ENCODE measurements at regions of chr4 and their contacts with region 1.

Region 1: DNA sequence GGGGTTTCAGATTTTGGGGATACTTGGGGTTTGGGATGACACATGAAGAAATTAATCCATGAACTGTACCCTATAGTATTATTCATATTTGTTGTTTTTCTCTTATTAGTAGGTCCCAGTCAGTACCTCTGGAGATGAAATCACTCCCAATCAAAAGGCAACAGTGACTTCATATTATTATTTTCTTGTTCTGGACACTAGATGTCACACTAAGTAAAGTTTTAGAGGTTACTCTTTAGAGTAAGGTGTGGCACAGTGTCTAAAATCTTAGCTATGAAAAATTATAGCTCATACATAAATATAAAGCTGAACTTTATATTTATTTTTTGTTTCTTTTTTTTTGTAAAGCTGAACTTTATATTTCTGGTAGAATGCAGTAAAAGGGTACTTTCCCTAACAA is 35.1 kb downstream of the FAM114A1 start:
- DNase-seq: peak; percentile 67
- ATAC-seq: peak; percentile 73
- H3K4me3 ChIP-seq: no peak overlapping the region
- H3K4me3 Mint-ChIP-seq: no peak overlapping the region
- H3K27ac ChIP-seq: no peak overlapping the region
- H3K27ac Mint-ChIP-seq: no peak overlapping the region
- H3K4me1 ChIP-seq: no peaks in the 10 kb centered on the region
- H3K4me1 Mint-ChIP-seq: peaks cover 6% of the 10 kb centered on the region
- H3K27me3 ChIP-seq: no peaks in the 10 kb centered on the region
- H3K27me3 Mint-ChIP-seq: no peaks in the 10 kb centered on the region
- CTCF ChIP-seq: peak; percentile 73

Region 2: GRCh38 chr4:38788327-38788726 is 114.4 kb before region 1 on chr4:
- CTCF ChIA-PET with region 1: no interaction called
- POLR2A ChIA-PET with region 1: no interaction called
- intact Hi-C with region 1: no loop called
- DNase-seq: no peak
- ATAC-seq: no peak
- H3K4me3 ChIP-seq: no peak overlapping the region
- H3K4me3 Mint-ChIP-seq: no peak overlapping the region
- H3K27ac ChIP-seq: no peak overlapping the region
- H3K27ac Mint-ChIP-seq: no peak overlapping the region
- H3K4me1 ChIP-seq: peaks cover 8 to 20% of the 10 kb centered on the region in 2 donors
- H3K4me1 Mint-ChIP-seq: peaks cover 31% of the 10 kb centered on the region
- H3K27me3 ChIP-seq: no peaks in the 10 kb centered on the region
- H3K27me3 Mint-ChIP-seq: no peaks in the 10 kb centered on the region
- CTCF ChIP-seq: no peak

Region 3: DNA sequence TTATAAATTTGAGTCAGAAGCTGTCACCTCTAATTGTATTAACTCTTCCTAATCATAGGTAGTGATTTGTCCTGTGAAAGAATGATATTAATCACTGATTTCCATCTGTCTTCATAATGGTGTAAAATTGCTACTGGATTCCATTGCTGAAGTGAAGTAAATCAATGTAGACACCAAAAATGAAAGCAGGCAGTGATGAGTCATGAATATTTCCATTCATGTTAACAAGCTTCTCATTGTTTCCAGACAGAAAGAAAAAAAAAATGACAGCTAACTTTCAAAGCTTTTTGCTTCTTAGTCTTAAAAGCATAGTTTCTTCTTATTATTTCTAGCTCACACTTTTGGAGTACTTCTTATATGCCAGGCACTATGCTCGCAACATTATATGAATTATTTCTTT is 13.6 kb before region 1 on chr4:
- CTCF ChIA-PET with region 1: interaction called, 20 read pairs
- POLR2A ChIA-PET with region 1: no interaction called
- intact Hi-C with region 1: no loop called
- DNase-seq: no peak
- ATAC-seq: no peak
- H3K4me3 ChIP-seq: no peak overlapping the region
- H3K4me3 Mint-ChIP-seq: no peak overlapping the region
- H3K27ac ChIP-seq: no peak overlapping the region
- H3K27ac Mint-ChIP-seq: peak overlapping the region; percentile 37
- H3K4me1 ChIP-seq: no peaks in the 10 kb centered on the region
- H3K4me1 Mint-ChIP-seq: peaks cover 4% of the 10 kb centered on the region
- H3K27me3 ChIP-seq: no peaks in the 10 kb centered on the region
- H3K27me3 Mint-ChIP-seq: no peaks in the 10 kb centered on the region
- CTCF ChIP-seq: no peak

Region 4: GRCh38 chr4:39044364-39044955 is 141.8 kb after region 1 on chr4:
- CTCF ChIA-PET with region 1: interaction called, 55 read pairs
- POLR2A ChIA-PET with region 1: no interaction called
- intact Hi-C with region 1: loop called (anchors 5 kb)
- DNase-seq: peak; percentile 99
- ATAC-seq: peak; percentile 85
- H3K4me3 ChIP-seq: peak overlapping the region; percentile 66 to 94 (median 75)
- H3K4me3 Mint-ChIP-seq: peak overlapping the region; percentile 80
- H3K27ac ChIP-seq: peak overlapping the region; percentile 93 to 95
- H3K27ac Mint-ChIP-seq: peak overlapping the region; percentile 90
- H3K4me1 ChIP-seq: peaks cover 45 to 48% of the 10 kb centered on the region in 2 donors
- H3K4me1 Mint-ChIP-seq: peaks cover 59% of the 10 kb centered on the region
- H3K27me3 ChIP-seq: no peaks in the 10 kb centered on the region
- H3K27me3 Mint-ChIP-seq: no peaks in the 10 kb centered on the region
- CTCF ChIP-seq: no peak

Region 5: DNA sequence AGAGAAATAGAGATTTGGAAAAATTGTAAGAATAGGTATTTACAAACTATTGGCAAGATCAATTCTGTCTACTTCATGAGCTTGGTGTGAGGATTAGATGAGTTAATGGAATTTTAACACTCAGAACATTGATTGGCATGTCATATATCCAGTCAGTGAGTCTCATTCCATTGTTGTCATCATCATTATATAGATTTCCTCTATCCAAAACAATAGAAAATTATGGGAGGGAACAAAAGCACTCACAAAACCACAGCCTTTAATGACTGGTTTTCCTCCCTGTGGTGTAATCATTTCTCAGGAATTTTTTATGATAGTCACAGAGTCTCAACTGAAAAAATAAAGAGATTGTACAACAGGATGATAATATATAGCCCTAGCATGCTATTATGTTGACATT is 180.5 kb after region 1 on chr4:
- CTCF ChIA-PET with region 1: interaction called, 19 read pairs
- POLR2A ChIA-PET with region 1: no interaction called
- intact Hi-C with region 1: no loop called
- DNase-seq: no peak
- ATAC-seq: no peak
- H3K4me3 ChIP-seq: no peak overlapping the region
- H3K4me3 Mint-ChIP-seq: no peak overlapping the region
- H3K27ac ChIP-seq: no peak overlapping the region
- H3K27ac Mint-ChIP-seq: no peak overlapping the region
- H3K4me1 ChIP-seq: no peaks in the 10 kb centered on the region
- H3K4me1 Mint-ChIP-seq: no peaks in the 10 kb centered on the region
- H3K27me3 ChIP-seq: no peaks in the 10 kb centered on the region
- H3K27me3 Mint-ChIP-seq: no peaks in the 10 kb centered on the region
- CTCF ChIP-seq: no peak

Region 6: DNA sequence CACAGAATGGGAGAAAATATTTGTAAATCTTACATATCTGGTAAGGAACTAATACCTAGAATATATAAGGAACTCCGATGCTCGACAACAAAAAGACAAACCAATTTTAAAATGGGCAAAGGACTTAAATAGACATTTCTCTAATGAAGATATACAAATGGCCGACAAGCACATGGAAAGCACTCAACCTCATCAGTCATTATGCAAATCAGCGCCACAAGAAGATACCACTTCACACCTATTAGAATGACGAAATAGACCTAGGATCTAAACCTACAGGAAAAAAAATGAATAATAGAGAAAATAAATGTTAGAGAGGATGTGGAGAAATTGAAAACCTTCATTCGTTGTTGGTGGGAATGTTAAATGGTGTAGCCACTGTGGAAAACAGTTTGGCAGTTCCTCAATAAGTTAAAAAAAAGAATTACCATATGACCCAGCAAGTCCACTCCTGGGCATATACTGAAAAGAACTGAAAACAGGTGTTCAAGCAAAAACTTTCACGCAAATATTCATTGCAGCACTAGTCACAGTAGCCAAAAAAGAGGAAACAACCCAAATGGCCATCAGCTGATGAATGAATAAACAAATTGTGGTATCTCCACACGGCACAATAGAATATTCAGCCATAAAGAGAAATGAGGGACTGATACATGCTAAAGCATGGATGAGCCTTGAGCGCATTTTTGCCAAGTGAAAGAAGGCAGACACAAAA is 222.3 kb after region 1 on chr4:
- CTCF ChIA-PET with region 1: interaction called, 17 read pairs
- POLR2A ChIA-PET with region 1: no interaction called
- intact Hi-C with region 1: no loop called
- DNase-seq: peak; percentile 78
- ATAC-seq: peak; percentile 86
- H3K4me3 ChIP-seq: no peak overlapping the region
- H3K4me3 Mint-ChIP-seq: peak overlapping the region; percentile 36
- H3K27ac ChIP-seq: peak overlapping the region in 1 of 2 donors; percentile 25
- H3K27ac Mint-ChIP-seq: peak overlapping the region; percentile 88
- H3K4me1 ChIP-seq: peaks cover 14 to 15% of the 10 kb centered on the region in 2 donors
- H3K4me1 Mint-ChIP-seq: peaks cover 19% of the 10 kb centered on the region
- H3K27me3 ChIP-seq: no peaks in the 10 kb centered on the region
- H3K27me3 Mint-ChIP-seq: no peaks in the 10 kb centered on the region
- CTCF ChIP-seq: no peak

Region 7: DNA sequence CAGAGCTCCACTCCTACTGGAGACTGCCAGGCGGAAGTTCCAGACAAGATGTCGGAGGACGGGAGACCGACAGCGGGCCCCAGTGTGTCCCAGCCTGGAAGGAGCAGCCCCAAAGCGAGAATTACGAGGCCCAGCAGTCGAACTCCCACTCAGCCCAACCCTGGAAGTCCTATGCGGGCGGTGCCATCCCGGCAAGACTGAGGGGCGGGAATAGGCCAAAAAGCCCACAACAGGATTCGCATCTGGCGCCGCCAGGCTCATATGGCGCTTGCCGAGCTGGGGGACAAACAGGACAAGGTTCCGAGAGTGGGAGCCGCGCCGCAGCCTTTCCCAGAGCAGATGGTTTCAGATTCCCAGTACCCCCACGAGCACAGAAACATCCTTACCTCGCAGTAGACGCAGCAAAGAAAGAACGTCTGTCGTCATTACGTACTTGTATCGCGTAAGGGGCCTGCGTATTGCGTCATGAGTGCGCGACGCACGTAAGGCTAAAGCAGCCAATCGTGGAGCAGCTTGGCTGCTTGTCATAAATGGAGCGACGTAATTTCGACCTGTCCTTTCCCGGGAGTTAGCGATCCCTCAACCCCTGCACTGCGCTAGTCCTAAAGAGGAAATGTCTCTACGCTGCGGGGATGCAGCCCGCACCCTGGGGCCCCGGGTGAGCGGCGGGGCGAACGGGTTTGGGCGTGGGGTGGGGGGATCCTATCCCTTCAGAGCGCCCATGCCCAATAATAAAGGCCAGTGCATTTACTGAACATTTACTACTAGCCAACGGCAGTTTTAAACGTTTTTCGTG is 556.0 kb after region 1 on chr4 and contains the starts of genes LIAS and RPL9:
- CTCF ChIA-PET with region 1: interaction called, 10 read pairs
- POLR2A ChIA-PET with region 1: no interaction called
- intact Hi-C with region 1: loop called (anchors 10 kb)
- DNase-seq: peak; percentile 98
- ATAC-seq: peak; percentile 86
- H3K4me3 ChIP-seq: peak within 1 kb of the TSS; percentile 77 to 100 (median 98)
- H3K4me3 Mint-ChIP-seq: peak within 1 kb of the TSS; percentile 97
- H3K27ac ChIP-seq: peak within 1 kb of the TSS; percentile 98 to 99
- H3K27ac Mint-ChIP-seq: peak within 1 kb of the TSS; percentile 99
- H3K4me1 ChIP-seq: peaks cover 19 to 27% of the 10 kb centered on the region in 2 donors
- H3K4me1 Mint-ChIP-seq: peaks cover 38% of the 10 kb centered on the region
- H3K27me3 ChIP-seq: no peaks in the 10 kb centered on the region
- H3K27me3 Mint-ChIP-seq: no peaks in the 10 kb centered on the region
- CTCF ChIP-seq: no peak
- total RNA-seq, gene LIAS: 20.9 and 24.7 TPM in 2 replicates
- total RNA-seq, gene RPL9: 2,031 and 2,048 TPM in 2 replicates